ENCODE measurements at regions of chr17 and their contacts with region 1.

Region 1: DNA sequence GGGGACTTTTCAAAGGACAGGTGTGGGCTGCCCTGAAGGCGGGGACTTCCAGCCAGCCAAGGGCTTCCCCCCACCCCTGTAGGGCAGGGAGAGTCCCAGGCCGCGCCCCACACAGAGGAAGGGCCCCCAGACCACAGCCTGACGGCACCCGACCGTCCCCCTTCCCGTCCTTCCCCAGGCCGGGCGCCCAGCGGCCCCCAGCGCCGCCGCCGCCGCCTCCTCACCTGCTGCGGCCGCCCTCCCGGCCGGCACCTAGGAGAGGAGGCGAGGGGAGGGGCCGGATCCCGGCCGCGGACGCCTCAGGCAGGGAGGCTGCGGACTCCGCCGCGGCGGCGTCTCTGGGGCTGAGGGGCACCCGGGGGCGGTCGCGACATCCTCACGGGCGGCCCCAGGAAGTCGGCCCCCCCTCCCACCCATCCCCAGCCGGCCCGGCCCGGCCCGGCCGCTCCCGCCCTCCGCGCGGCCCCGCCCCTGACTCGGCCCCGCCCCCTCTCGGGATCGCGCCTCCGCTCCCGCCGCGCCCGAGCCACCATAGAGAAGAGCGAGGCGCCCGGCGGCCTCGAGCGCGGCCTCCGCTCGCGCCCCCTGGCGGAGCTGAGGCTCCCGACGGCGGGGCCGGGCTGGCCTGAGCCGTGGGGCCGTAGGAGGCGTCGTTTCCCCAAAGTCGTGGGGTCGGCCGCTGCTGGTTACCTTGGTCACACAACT is 25.5 kb upstream of the RFFL start:
- DNase-seq: peak; percentile 96
- H3K4me3 ChIP-seq: peak overlapping the region; percentile 83 to 92
- H3K27ac ChIP-seq: peak overlapping the region; percentile 71 to 81
- H3K4me1 ChIP-seq: peaks cover 12 to 22% of the 10 kb centered on the region in 2 experiments; a peak in 3 of 4 replicates
- H3K27me3 ChIP-seq: no peaks in the 10 kb centered on the region
- CTCF ChIP-seq: peak; percentile 70
- EP300 ChIP-seq: 0 out of 4 replicates have a peak, but pooled peaks of 1 of the 2 experiments have one; percentile 6
- RAD21 ChIP-seq: peak; percentile 57

Region 2: GRCh38 chr17:35018814-35019213 is 70.2 kb before region 1 on chr17:
- CTCF ChIA-PET with region 1: no interaction called
- POLR2A ChIA-PET with region 1: no interaction called
- DNase-seq: no peak
- H3K4me3 ChIP-seq: no peak overlapping the region
- H3K27ac ChIP-seq: no peak overlapping the region
- H3K4me1 ChIP-seq: peaks cover 0 to 23% of the 10 kb centered on the region in 2 experiments; a peak in 3 of 4 replicates
- H3K27me3 ChIP-seq: no peaks in the 10 kb centered on the region
- CTCF ChIP-seq: no peak
- EP300 ChIP-seq: no peak
- RAD21 ChIP-seq: no peak

Region 3: DNA sequence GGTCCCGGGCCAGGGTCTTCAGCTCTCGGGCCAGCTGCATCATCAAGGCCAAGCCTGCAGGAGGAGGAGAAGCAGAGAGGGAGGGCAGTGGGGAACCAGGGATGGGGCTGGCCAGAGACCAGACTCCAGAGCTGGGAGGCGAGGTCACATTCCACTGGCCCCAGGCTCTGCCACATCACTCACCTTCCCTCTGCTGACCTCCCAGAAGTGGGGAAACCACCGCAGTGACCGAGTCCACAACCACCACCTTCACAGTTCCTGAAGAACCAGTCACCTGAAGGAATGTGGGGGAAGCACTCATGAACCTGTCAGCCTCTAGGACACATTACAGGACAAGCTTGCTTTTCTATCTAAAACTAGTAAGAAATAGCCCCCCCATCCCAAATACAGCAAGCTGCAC is 14.2 kb after region 1 on chr17:
- CTCF ChIA-PET with region 1: interaction called, 22 read pairs
- POLR2A ChIA-PET with region 1: no interaction called
- DNase-seq: no peak
- H3K4me3 ChIP-seq: no peak overlapping the region
- H3K27ac ChIP-seq: no peak overlapping the region
- H3K4me1 ChIP-seq: no peaks in the 10 kb centered on the region
- H3K27me3 ChIP-seq: no peaks in the 10 kb centered on the region
- CTCF ChIP-seq: no peak
- EP300 ChIP-seq: no peak
- RAD21 ChIP-seq: no peak

Measured in SK-N-SH (cell line).